ENCODE measurements at regions of chr1 and their contacts with region 1.

Region 1: DNA sequence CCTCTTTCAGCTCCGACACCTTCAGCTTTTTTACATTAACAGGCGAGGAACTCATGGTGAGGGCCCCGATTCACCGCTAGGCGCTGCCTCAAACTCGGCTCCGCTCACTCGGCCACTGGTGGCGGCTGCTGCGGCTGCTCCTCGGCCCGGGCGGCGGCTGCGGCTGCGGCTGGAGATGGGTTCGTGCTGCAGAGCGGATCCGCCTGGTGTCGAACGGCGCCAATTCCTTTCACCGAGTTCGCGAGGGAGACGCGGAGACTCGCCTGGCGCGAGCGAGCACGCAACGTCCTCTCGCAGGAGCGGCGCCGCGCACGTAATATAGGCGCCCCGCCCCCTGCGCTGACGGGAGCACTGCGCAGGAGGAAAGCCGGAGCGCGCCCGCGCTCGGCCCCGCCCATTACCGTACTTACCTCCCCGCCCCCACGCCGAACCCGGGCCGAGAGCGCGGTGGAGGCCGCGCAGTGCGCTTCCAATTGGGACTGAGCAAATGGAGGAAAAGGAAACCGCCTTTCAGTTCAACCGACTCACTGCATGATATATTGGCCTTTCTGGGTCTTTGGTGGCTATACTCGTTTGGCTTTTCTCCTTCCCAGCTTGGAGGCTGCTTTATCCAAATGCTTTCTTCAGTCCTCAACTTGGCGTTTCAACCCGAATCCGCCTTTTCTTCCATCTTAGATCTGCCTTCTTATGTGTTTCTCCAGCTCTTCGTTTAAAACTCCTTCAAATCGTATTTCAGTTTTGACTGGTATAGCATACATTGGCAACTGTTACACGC is at the start of gene HNRNPU:
- DNase-seq: peak; percentile 95
- H3K4me3 Mint-ChIP-seq: peak within 1 kb of the TSS; percentile 88
- H3K27ac Mint-ChIP-seq: peak within 1 kb of the TSS; percentile 94
- H3K4me1 Mint-ChIP-seq: peaks cover 37% of the 10 kb centered on the region
- H3K27me3 Mint-ChIP-seq: no peaks in the 10 kb centered on the region
- total RNA-seq, gene HNRNPU: 569 and 589 TPM in 2 replicates

Region 2: DNA sequence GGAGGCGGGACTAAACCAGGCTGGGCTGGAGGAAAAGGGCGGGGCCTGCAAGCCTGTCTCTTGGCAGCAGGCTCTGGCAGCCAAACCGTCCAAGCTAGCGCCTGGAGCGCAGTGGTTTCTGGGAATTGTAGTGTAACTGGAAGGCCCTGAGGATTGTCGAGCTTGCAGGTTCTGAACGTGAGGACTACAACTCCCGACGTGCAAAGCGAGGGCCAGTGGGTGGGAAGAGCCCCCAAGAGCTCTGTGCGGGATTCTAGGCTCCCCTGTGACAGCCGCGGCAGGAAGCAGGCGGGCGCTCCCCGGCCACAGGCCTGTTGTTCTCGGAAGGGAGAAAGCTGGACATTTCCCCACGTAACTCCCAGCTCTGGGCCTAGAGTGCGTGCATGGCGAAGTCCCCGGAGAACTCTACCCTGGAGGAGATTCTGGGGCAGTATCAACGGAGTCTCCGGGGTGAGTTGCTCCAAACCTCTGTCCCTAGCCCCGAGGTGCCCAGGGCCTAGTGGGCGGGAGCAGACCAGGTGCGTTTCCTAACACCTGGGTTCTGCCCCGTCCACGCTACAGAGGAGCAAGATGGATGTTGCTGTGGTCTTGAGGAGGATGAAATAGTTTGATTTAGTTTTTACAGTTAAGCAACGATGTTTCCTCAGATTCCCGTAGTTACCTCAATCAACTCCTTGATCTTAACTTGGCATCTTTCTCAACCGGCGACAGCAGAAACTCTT is 1608.5 kb before region 1 on chr1 and contains the start of gene SDCCAG8:
- intact Hi-C with region 1: loop called (anchors 5 kb)
- DNase-seq: peak; percentile 94
- H3K4me3 Mint-ChIP-seq: peak within 1 kb of the TSS; percentile 97
- H3K27ac Mint-ChIP-seq: peak within 1 kb of the TSS; percentile 100
- H3K4me1 Mint-ChIP-seq: peaks cover 20% of the 10 kb centered on the region
- H3K27me3 Mint-ChIP-seq: no peaks in the 10 kb centered on the region
- total RNA-seq, gene SDCCAG8: 18.1 and 25.4 TPM in 2 replicates

Region 3: DNA sequence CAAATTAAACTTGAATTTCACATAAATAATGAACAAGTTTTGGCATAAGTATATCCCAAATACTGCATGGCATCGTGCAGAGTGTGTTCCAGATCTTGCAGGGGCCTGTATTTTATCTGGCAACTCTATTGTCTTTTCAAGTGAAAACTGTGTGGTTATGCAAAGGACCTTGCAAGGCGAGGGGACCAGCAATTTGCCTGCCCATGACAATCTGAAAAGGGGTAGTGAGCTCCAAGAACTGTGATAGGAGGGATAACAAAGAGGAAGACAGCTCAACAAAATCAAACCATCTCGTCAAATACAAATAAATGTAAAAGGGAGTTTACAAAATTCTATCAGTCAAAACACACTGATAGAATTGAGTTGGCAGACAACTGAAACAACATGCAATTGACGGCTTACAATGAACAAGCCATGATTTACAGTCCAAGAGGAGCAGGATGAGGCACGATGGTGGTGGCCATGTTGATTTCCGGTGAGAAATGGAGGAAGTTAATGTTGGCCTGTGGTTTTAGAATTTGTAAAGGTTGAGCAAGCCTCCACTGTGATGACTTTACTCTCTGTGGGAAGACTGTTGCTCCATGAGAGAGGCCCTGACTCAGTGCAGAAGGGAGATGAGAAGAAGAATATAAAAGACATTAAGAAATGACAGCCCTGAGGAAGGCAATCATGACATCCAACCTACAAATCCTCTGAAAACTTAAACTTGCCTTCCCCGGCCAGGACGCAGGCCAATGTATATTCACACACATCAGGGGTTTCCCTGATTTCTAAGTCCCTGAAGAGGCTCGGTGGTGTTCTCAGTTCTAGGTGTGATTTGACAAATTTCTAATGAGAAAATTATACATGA is 544.9 kb before region 1 on chr1:
- intact Hi-C with region 1: loop called (anchors 2 kb)
- DNase-seq: peak; percentile 39
- H3K4me3 Mint-ChIP-seq: peak overlapping the region; percentile 46
- H3K27ac Mint-ChIP-seq: peak overlapping the region; percentile 90
- H3K4me1 Mint-ChIP-seq: peaks cover 45% of the 10 kb centered on the region
- H3K27me3 Mint-ChIP-seq: no peaks in the 10 kb centered on the region

Region 4: DNA sequence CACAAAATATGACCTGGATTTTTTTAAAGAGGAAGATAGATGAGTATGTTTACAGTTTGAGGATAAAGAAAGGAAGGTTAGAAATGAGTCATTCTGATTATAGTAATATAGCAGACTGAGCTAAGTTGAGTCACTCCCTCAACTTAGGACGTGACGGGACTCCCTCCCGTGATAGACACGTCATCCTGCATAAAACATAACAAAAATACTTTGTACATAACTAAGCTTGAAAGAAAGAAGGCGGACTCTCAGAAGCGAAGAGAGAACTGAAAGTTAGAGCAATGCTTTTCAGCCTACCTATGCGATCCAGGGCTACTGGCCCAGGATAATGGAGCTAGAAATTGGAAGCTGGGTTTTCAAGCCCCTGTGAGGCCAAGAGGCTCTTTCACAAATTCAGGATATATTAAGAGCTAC is 264.5 kb before region 1 on chr1:
- intact Hi-C with region 1: loop called (anchors 1 kb)
- DNase-seq: peak; percentile 49
- H3K4me3 Mint-ChIP-seq: peak overlapping the region; percentile 70
- H3K27ac Mint-ChIP-seq: peak overlapping the region; percentile 90
- H3K4me1 Mint-ChIP-seq: peaks cover 18% of the 10 kb centered on the region
- H3K27me3 Mint-ChIP-seq: peaks cover 4% of the 10 kb centered on the region

Region 5: DNA sequence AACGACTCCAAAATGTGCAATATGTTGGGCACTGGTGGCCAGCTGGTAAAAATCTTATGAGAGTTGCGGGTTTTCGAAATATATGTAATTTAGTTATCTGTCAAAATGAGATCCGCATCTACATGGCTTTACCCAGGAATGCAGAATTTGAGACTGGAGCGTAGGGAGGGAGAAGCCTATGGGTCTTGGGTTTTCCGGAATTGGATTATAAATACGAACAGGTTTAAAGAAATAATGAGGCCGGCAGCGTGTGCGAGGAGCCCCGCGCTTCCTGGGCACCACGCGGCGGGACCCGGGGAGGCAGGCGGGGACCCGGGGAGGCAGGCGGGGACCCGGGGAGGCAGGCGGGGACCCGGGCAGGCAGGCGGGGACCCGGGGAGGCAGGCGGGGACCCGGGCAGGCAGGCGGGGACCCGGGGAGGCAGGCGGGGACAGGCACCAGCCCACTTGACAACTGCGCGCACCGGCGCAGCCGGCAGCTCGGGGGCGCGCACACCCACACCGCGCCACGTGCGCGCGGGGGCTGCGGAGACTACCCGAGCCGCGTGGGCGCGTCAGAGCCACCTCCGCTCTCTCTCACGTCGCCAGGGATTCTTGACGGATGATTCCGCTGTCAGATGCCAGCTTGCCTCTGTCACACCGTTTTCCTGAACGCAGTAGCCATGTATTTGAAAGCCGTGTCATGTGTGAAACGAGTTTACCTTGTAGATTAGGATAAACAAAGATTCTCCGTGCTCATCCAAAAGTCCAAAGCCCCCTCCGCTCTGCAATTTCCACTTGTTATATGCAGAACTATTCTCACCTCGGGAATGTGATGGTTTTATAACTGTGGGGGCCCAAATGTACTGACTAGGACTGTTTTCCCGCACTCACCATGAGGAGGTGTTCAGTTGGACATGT is 54.2 kb after region 1 on chr1:
- intact Hi-C with region 1: loop called (anchors 1 kb)
- DNase-seq: peak; percentile 40
- H3K4me3 Mint-ChIP-seq: peak overlapping the region; percentile 82
- H3K27ac Mint-ChIP-seq: peak overlapping the region; percentile 62
- H3K4me1 Mint-ChIP-seq: peaks cover 14% of the 10 kb centered on the region
- H3K27me3 Mint-ChIP-seq: peaks cover 30% of the 10 kb centered on the region

Region 6: DNA sequence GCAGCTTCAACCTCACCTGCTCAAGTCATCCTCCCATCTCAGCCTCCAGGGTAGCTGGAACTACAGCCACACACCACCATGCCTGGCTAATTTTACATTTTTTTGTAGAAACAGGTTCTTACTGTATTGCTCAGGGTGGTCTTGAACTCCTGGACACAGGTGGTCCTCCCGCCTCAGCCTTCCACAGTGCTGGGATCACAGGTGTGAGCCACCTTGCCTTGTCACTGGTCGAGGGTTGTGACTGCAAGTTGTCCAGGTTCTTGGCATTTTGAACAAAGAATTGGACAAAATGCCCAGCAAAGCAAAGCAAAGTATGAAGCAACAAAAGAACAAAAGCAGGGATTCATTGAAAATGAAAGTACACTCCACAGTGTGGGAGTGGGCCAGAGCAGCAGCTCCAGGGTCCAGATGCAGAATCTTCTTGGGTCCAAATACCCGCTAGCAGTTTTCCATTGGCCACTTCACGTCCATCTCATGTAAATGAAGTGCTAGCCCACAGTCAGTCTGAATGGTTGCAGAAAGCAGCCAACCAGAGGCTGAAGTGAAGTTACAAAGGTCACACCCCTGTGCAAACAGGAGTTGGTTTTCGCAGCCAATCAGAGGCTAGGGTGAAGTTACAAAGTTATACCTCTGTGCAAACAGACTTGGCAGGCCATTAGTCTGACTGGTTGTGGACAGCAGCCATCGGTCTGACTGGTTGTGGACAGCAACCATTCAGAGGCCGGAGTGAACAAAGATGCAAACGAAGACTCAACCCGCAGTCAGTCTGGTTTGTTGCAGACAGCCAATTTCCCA is 180.8 kb after region 1 on chr1:
- intact Hi-C with region 1: loop called (anchors 1 kb)
- DNase-seq: no peak
- H3K4me3 Mint-ChIP-seq: no peak overlapping the region
- H3K27ac Mint-ChIP-seq: no peak overlapping the region
- H3K4me1 Mint-ChIP-seq: peaks cover 12% of the 10 kb centered on the region
- H3K27me3 Mint-ChIP-seq: no peaks in the 10 kb centered on the region